Sigmoid colon (tissue), 7 donors: ENCODE measurements at regions of chr11 and their contacts with region 1.

Region 1: GRCh38 chr11:44911029-44911814 is 39.5 kb downstream of the TP53I11 start:
- DNase-seq: peak; percentile 92
- H3K4me3 ChIP-seq: no peak overlapping the region
- H3K27ac ChIP-seq: peak overlapping the region in 2 of 4 donors; percentile 11 to 49
- H3K4me1 ChIP-seq: peaks cover 0 to 16% (median 15%) of the 10 kb centered on the region in 4 donors
- H3K27me3 ChIP-seq: no peaks in the 10 kb centered on the region
- CTCF ChIP-seq: peak; percentile 71 to 87 (median 82)
- EP300 ChIP-seq: no peak
- POLR2A ChIP-seq: no peak

Region 2: DNA sequence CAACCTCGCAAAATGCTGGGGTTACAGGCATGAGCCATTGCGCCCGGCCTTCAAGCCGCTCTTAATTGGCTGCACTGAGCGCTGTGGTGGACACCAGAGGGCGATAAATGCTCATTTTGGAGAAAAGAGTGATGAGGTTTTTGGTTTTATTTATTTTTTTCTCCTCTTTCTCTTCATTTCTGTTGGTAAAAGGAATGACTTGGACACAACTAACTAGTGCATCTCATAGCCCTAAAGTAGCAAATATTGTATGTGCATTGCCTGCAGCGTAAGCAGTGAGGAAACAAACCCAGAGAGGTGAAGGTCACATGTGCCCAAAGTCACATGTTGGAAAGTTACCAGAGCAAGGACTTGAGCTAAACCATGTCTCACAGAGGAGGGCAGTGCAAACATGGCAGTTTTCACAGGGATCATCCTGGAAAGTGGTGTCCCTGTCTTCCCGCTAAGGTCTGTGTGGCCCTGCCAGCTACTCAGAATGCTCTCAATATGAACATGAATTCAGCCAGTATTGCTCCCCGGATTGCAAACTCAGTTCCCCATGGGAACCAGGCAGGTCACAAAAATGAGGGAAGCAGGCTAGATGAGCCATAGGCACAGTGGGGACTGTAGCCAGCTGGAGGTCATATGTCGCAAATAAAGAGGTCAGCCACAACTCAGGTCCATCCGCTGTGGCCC is 354.4 kb before region 1 on chr11:
- intact Hi-C with region 1: loop called (anchors 1 kb)
- DNase-seq: peak; percentile 78
- H3K4me3 ChIP-seq: no peak overlapping the region
- H3K27ac ChIP-seq: no peak overlapping the region
- H3K4me1 ChIP-seq: peaks cover 0 to 12% (median 5%) of the 10 kb centered on the region in 4 donors
- H3K27me3 ChIP-seq: no peaks in the 10 kb centered on the region
- CTCF ChIP-seq: peak; percentile 75 to 83 (median 80)
- EP300 ChIP-seq: no peak
- POLR2A ChIP-seq: no peak